Activated naive CD4-positive, alpha-beta T cell treated with anti-CD3 and anti-CD28 coated beads for 36 hours (primary cell): ENCODE measurements at regions of chr3 and their contacts with region 1.

Region 1: GRCh38 chr3:37974121-37975083 is 16.2 kb upstream of the VILL start:
- DNase-seq: peak; percentile 84
- H3K4me3 Mint-ChIP-seq: no peak overlapping the region
- H3K27ac Mint-ChIP-seq: no peak overlapping the region
- H3K4me1 Mint-ChIP-seq: peaks cover 4% of the 10 kb centered on the region
- H3K27me3 Mint-ChIP-seq: no peaks in the 10 kb centered on the region

Region 2: DNA sequence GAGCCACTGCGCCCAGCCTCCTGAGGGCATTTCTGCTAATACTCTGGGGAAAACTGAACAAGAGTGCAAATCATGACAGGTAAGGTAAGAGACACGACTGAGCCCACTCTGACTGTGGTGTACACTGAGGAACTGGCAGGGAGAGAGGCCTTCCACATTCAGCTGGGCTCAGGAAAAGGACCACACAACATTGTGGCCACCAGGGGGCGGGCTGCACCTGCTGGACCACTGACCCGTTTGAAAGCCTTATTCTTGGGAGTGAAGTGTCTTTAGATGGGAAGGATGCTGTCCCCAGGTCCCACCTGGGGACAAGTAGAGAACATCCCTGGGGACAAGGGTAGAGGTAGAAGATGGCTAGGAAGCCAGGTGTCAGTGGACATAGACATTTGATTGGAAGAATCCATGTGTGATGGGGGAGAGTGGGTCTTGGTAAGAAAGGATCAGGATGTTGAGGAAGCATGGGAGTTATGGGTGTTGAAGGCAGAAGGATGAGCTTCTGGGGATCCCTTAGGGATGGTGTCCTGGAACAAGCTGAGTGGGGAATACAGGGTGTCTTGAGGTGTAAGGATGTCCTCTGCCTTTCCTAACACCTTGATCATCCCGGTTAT is 118.9 kb before region 1 on chr3:
- CTCF ChIA-PET with region 1: interaction called, 43 read pairs
- intact Hi-C with region 1: no loop called
- DNase-seq: peak; percentile 88
- H3K4me3 Mint-ChIP-seq: no peak overlapping the region
- H3K27ac Mint-ChIP-seq: no peak overlapping the region
- H3K4me1 Mint-ChIP-seq: peaks cover 6% of the 10 kb centered on the region
- H3K27me3 Mint-ChIP-seq: no peaks in the 10 kb centered on the region

Region 3: GRCh38 chr3:37996785-37997301 is 22.4 kb after region 1 on chr3:
- CTCF ChIA-PET with region 1: interaction called, 35 read pairs
- intact Hi-C with region 1: loop called (anchors 1 kb)
- DNase-seq: peak; percentile 94
- H3K4me3 Mint-ChIP-seq: no peak overlapping the region
- H3K27ac Mint-ChIP-seq: peak overlapping the region; percentile 93
- H3K4me1 Mint-ChIP-seq: peaks cover 48% of the 10 kb centered on the region
- H3K27me3 Mint-ChIP-seq: no peaks in the 10 kb centered on the region

Region 4: GRCh38 chr3:38039101-38039898 is 64.9 kb after region 1 on chr3 and contains the start of gene DLEC1:
- CTCF ChIA-PET with region 1: no interaction called
- intact Hi-C with region 1: loop called (anchors 1 kb)
- DNase-seq: peak; percentile 88
- H3K4me3 Mint-ChIP-seq: peak within 1 kb of the TSS; percentile 66
- H3K27ac Mint-ChIP-seq: peak within 1 kb of the TSS; percentile 88
- H3K4me1 Mint-ChIP-seq: peaks cover 28% of the 10 kb centered on the region
- H3K27me3 Mint-ChIP-seq: peaks cover 4% of the 10 kb centered on the region
- total RNA-seq, gene DLEC1: 0.17 to 0.19 TPM

Region 5: GRCh38 chr3:38346587-38347410 is 372.4 kb after region 1 on chr3 and contains the start of gene XYLB:
- CTCF ChIA-PET with region 1: interaction called, 4 read pairs
- intact Hi-C with region 1: loop called (anchors 5 kb)
- DNase-seq: peak; percentile 79
- H3K4me3 Mint-ChIP-seq: peak within 1 kb of the TSS; percentile 72
- H3K27ac Mint-ChIP-seq: no peak within 1 kb of the TSS
- H3K4me1 Mint-ChIP-seq: peaks cover 4% of the 10 kb centered on the region
- H3K27me3 Mint-ChIP-seq: peaks cover 2% of the 10 kb centered on the region
- total RNA-seq, gene XYLB: 2.5 to 2.8 TPM